ENCODE measurements at regions of chr1 and their contacts with region 1.

Region 1: DNA sequence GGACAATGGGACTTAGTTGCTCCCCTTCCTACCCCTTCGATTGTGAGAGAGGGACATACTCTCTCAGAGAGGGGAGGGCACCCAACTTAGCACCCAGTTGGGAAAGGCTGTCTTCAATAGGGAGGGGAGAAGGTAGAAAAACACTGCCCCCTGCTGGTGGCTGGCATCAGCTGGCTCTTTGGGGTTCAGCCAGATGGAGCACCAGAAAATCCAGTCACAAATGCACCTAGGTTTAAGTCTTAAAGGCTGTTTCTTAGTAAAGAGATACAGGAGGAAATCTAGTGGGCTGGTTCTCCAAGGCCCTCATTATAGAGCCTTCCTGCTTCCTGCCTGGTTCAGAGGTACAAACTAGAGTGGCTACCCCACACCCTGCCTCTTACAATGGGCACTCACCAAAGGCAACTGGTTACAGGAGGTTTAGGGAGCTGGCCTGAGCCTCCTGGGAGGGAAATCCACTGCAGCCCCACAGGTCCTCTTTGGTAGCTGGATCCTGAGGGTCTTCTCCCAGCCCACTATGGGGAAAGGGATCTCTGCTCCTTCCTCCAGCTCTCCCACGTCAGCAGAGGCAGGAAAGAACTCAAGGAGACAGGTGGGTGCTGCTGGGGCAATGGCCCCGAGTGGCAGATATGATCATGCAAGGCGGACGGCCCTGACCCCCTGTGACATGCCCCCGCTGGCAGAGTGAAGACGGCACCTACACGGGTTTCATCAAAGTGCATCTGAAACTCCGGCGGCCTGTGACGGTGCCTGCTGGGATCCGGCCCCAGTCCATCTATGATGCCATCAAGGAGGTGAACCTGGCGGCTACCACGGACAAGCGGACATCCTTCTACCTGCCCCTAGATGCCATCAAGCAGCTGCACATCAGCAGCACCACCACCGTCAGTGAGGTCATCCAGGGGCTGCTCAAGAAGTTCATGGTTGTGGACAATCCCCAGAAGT is 28.3 kb downstream of the EIF2D start:
- DNase-seq: peak; percentile 45
- ATAC-seq: peak; percentile 87
- H3K4me3 ChIP-seq: no peak overlapping the region
- H3K27ac ChIP-seq: no peak overlapping the region
- H3K4me1 ChIP-seq: no peaks in the 10 kb centered on the region
- H3K27me3 ChIP-seq: no peaks in the 10 kb centered on the region
- CTCF ChIP-seq: peak; percentile 92 to 98 (median 95)
- POLR2A ChIP-seq: no peak
- RAD21 ChIP-seq: peak; percentile 98

Region 2: GRCh38 chr1:206479183-206480125 is 104.5 kb before region 1 on chr1:
- CTCF ChIA-PET with region 1: interaction called, 12 read pairs
- POLR2A ChIA-PET with region 1: no interaction called
- RAD21 ChIA-PET with region 1: no interaction called
- intact Hi-C with region 1: no loop called
- DNase-seq: no peak
- ATAC-seq: peak; percentile 89
- H3K4me3 ChIP-seq: no peak overlapping the region
- H3K27ac ChIP-seq: no peak overlapping the region
- H3K4me1 ChIP-seq: peaks cover 0 to 6% of the 10 kb centered on the region in 2 experiments; a peak in 1 of 4 replicates
- H3K27me3 ChIP-seq: no peaks in the 10 kb centered on the region
- CTCF ChIP-seq: peak; percentile 73 to 87 (median 77); a peak in 5 of 6 replicates
- POLR2A ChIP-seq: no peak
- RAD21 ChIP-seq: peak; percentile 83

Region 3: GRCh38 chr1:206489980-206490770 is 93.8 kb before region 1 on chr1:
- CTCF ChIA-PET with region 1: interaction called, 96 read pairs
- POLR2A ChIA-PET with region 1: no interaction called
- RAD21 ChIA-PET with region 1: interaction called, 8 to 10 read pairs
- intact Hi-C with region 1: loop called (anchors 1 kb)
- DNase-seq: no peak
- ATAC-seq: peak; percentile 96
- H3K4me3 ChIP-seq: no peak overlapping the region
- H3K27ac ChIP-seq: no peak overlapping the region
- H3K4me1 ChIP-seq: no peaks in the 10 kb centered on the region
- H3K27me3 ChIP-seq: no peaks in the 10 kb centered on the region
- CTCF ChIP-seq: peak; percentile 94 to 98 (median 94)
- POLR2A ChIP-seq: no peak
- RAD21 ChIP-seq: peak; percentile 99

Region 4: DNA sequence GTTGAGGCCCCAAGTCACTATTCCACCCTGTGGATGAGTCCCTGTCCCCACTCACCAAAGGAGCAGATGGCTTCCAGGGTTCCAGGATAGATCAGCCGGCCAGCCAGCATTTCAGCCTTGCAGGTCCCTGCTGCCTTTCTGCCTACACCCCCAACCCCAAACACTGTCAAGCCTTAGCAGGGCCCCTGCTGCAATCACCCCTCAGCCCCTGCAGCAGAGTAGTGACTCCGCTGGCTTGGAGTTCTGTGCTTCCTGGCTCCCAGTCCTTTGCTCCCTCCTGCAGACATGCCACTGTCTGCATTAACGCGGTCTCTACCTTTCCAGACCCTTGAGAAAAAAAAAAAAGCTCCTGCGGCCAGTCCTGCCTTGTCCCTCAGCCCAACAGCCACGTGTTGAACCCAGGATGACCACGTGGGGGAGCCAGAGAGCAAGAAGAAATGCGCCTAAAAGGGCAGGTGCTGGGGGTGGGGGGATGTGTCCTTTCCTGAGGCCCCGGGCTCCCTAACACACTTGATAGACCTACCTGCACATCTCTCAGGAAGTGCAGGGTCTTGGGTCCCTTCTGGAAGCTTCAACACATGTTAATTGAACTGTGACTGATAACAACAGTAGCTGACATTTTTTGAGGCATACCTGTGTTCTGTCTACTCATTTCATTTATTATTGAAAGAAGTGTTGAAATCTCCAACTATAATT is 39.3 kb before region 1 on chr1:
- CTCF ChIA-PET with region 1: interaction called, 15 read pairs
- POLR2A ChIA-PET with region 1: no interaction called
- RAD21 ChIA-PET with region 1: no interaction called
- intact Hi-C with region 1: loop called (anchors 1 kb)
- DNase-seq: peak; percentile 37
- ATAC-seq: peak; percentile 98
- H3K4me3 ChIP-seq: no peak overlapping the region
- H3K27ac ChIP-seq: no peak overlapping the region
- H3K4me1 ChIP-seq: peaks cover 0 to 7% of the 10 kb centered on the region in 2 experiments; a peak in 2 of 4 replicates
- H3K27me3 ChIP-seq: no peaks in the 10 kb centered on the region
- CTCF ChIP-seq: peak; percentile 72 to 89 (median 86)
- POLR2A ChIP-seq: no peak
- RAD21 ChIP-seq: peak; percentile 71